ENCODE measurements at regions of chr6 and their contacts with region 1.

Region 1: DNA sequence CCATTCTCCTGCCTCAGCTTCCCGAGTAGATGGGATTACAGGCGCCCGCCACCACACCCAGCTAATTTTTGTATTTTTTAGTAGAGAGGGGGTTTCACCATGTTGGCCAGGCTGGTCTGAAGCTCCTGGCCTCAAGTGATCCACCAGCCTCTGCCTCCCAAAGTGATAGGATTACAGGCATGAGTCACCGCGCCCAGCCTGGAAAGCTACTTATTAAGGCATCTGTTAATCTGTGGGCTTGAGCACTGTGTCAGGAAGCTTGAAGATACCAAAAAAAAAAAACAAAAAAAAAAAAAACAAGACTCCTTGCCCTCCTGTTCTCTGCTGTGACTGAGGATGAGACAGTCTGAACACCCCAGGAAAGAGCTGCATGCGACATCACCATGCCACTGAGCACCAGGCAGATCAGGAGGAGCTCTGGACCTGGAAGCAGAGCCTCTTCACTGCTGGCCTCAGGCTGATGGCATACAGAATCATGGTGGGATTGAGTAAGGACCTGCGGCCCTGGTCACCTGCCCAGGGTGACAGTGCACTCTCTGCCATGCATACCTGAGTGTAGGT is 166.5 kb upstream of the SNX9 start:
- DNase-seq: no peak
- ATAC-seq: no peak
- H3K4me3 ChIP-seq: no peak overlapping the region
- H3K27ac ChIP-seq: no peak overlapping the region
- H3K4me1 ChIP-seq: no peaks in the 10 kb centered on the region
- H3K27me3 ChIP-seq: no peaks in the 10 kb centered on the region
- CTCF ChIP-seq: no peak

Region 2: DNA sequence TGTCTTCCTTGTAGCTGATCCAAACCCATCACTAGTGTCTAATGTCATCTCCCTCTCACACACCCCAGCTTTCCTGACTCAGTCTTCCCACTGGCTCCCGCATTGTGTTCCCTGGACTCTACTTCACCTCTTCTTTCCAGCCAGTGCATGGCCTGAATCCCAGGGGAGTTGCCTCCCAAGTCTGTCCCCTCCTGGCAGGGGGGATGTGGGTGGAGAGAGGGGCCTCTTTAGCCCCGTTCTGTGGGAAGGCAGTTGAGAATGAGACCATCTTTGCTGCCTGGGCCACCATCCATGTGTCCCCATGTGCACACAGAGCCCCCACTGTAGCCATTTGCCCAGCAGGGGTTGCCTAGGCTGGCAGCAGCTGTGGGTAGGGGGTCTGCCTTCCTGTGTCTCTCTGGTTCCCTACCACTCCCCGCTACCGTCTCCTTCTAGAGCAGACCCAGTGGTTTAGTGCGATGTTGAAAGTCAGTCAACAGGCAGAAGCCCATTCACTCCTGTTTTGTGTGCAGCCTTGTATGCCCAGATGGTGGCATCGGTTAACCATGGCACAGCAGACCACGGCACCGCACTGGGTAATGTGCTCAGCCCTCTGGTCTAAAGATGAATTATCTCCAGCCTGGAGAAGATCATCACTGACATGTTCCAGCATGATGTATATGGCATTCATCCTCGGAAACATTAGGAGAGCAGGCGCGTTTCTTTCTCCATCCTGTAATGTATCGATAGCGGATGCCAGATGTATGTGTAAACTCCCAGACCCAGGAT is 12.3 kb before region 1 on chr6:
- CTCF ChIA-PET with region 1: no interaction called
- POLR2A ChIA-PET with region 1: interaction called, 25 read pairs
- intact Hi-C with region 1: no loop called
- DNase-seq: peak; percentile 28
- ATAC-seq: peak; percentile 73
- H3K4me3 ChIP-seq: no peak overlapping the region
- H3K27ac ChIP-seq: no peak overlapping the region
- H3K4me1 ChIP-seq: no peaks in the 10 kb centered on the region
- H3K27me3 ChIP-seq: no peaks in the 10 kb centered on the region
- CTCF ChIP-seq: peak; percentile 57